ENCODE measurements at regions of chr1 and their contacts with region 1.

Region 1: GRCh38 chr1:24847995-24848881 is 81.8 kb downstream of the RUNX3 start:
- DNase-seq: peak; percentile 95
- ATAC-seq: peak; percentile 94
- H3K4me3 ChIP-seq: peak overlapping the region in 4 of 5 experiments; percentile 54 to 66 (median 64)
- H3K4me3 Mint-ChIP-seq: peak overlapping the region; percentile 80
- H3K27ac ChIP-seq: peak overlapping the region; percentile 68 to 83
- H3K27ac Mint-ChIP-seq: peak overlapping the region; percentile 78
- H3K4me1 ChIP-seq: peaks cover 4 to 13% of the 10 kb centered on the region in 2 donors
- H3K4me1 Mint-ChIP-seq: peaks cover 12% of the 10 kb centered on the region
- H3K27me3 ChIP-seq: no peaks in the 10 kb centered on the region
- H3K27me3 Mint-ChIP-seq: no peaks in the 10 kb centered on the region
- CTCF ChIP-seq: peak; percentile 94

Region 2: GRCh38 chr1:24897767-24898483 is 49.7 kb after region 1 on chr1:
- CTCF ChIA-PET with region 1: interaction called, 9 read pairs
- POLR2A ChIA-PET with region 1: no interaction called
- intact Hi-C with region 1: loop called (anchors 1 kb)
- DNase-seq: peak; percentile 61
- ATAC-seq: peak; percentile 51
- H3K4me3 ChIP-seq: no peak overlapping the region
- H3K4me3 Mint-ChIP-seq: no peak overlapping the region
- H3K27ac ChIP-seq: no peak overlapping the region
- H3K27ac Mint-ChIP-seq: peak overlapping the region; percentile 68
- H3K4me1 ChIP-seq: peaks cover 0 to 10% of the 10 kb centered on the region in 2 donors
- H3K4me1 Mint-ChIP-seq: peaks cover 33% of the 10 kb centered on the region
- H3K27me3 ChIP-seq: no peaks in the 10 kb centered on the region
- H3K27me3 Mint-ChIP-seq: no peaks in the 10 kb centered on the region
- CTCF ChIP-seq: peak; percentile 78

Region 3: DNA sequence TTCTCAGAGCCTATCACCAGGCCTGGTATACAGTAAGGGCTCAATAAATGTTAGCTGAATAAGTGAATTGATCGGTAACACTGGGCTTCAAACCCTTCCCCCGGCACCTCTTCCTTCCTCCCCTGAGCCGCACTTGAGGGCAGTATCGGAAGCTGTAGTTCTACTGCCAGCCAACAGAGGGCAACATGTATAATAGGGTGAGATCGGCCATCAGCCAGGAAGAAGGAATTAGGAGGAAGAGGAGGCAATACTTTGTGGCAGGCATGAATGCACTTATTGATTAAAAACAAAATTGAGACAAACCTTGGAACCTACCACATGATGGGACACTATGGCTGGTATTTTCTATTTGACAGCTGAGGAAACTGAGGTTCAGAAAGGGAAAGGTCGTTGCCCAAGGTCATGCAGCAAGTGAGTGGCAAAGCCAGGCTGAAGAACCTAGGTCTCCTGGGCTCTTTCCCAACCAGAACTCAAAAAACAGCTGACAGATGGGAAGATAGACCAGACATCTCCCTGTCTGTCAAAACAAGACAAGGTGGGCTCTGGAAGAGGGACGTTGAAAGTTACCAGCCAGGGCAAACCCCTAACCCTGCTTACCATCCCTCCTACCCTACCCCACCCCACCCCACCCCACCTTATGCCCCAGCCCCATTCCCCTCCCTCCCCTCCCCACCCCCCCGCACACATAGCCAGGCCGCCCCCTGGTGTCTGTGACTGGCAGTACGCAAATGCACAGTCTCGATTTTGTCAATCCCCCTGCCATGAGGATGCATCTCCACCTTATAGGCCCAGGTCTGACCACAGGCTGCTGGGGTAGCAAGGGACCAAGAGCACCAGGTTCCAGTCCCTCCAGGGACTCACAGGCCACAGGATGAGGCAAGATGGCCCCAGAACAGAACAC is 189.2 kb after region 1 on chr1:
- CTCF ChIA-PET with region 1: interaction called, 118 read pairs
- POLR2A ChIA-PET with region 1: no interaction called
- intact Hi-C with region 1: loop called (anchors 1 kb)
- DNase-seq: peak; percentile 74
- ATAC-seq: peak; percentile 65
- H3K4me3 ChIP-seq: no peak overlapping the region
- H3K4me3 Mint-ChIP-seq: peak overlapping the region; percentile 0
- H3K27ac ChIP-seq: no peak overlapping the region
- H3K27ac Mint-ChIP-seq: peak overlapping the region; percentile 63
- H3K4me1 ChIP-seq: peaks cover 36 to 49% of the 10 kb centered on the region in 2 donors
- H3K4me1 Mint-ChIP-seq: peaks cover 34% of the 10 kb centered on the region
- H3K27me3 ChIP-seq: peaks cover 0 to under 1% (median 0%) of the 10 kb centered on the region in 4 experiments
- H3K27me3 Mint-ChIP-seq: peaks cover 5% of the 10 kb centered on the region
- CTCF ChIP-seq: peak; percentile 71

Region 4: DNA sequence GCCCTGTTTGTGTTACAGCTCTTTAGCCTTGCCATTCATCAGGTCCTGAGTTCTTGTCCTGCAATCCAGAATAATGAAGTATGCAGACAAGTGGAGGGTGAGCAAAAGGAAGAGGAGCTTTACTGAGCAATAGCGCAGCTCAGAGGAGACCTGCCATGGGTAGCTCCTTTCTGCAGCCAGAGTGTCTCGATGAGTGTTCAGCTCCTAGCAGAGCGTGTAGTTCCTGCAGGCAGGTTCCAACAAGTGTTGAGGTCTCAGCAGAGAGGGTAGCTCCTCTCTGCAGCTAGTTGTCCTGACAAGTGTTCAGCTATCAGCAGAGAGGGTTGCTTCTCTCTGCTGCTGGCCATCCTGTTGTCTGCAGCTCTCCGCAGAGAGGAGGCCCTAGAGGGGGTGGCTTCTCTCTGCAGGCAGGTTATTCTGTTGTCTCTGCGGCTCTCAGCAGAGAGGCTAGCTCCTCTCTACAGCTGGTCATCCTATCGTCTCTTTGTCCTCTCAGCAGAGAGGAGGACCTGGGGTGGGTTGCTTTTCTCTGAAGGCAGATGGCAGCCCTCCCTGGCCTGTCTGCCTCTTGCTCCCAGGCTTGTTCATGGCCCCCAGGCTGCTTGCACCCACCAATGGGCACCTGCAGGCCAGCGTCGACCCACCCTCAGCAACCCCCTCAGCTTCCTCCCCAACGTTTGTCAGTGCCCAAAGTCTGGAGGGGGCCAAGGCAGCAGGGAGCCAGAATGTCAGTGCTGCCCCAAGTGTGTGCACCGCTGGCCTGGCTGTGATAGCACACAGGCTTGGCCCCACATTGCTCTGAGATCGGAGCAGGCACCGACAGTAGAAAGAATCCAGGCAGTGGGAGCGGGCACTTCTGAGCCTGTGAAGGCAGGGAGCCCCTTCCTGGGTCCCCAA is 194.3 kb after region 1 on chr1:
- CTCF ChIA-PET with region 1: interaction called, 118 read pairs
- POLR2A ChIA-PET with region 1: no interaction called
- intact Hi-C with region 1: loop called (anchors 1 kb)
- DNase-seq: no peak
- ATAC-seq: no peak
- H3K4me3 ChIP-seq: no peak overlapping the region
- H3K4me3 Mint-ChIP-seq: no peak overlapping the region
- H3K27ac ChIP-seq: no peak overlapping the region
- H3K27ac Mint-ChIP-seq: no peak overlapping the region
- H3K4me1 ChIP-seq: peaks cover 11 to 18% of the 10 kb centered on the region in 2 donors
- H3K4me1 Mint-ChIP-seq: peaks cover 11% of the 10 kb centered on the region
- H3K27me3 ChIP-seq: peaks cover 0 to 7% (median 0%) of the 10 kb centered on the region in 4 experiments
- H3K27me3 Mint-ChIP-seq: peaks cover 5% of the 10 kb centered on the region
- CTCF ChIP-seq: no peak

Region 5: DNA sequence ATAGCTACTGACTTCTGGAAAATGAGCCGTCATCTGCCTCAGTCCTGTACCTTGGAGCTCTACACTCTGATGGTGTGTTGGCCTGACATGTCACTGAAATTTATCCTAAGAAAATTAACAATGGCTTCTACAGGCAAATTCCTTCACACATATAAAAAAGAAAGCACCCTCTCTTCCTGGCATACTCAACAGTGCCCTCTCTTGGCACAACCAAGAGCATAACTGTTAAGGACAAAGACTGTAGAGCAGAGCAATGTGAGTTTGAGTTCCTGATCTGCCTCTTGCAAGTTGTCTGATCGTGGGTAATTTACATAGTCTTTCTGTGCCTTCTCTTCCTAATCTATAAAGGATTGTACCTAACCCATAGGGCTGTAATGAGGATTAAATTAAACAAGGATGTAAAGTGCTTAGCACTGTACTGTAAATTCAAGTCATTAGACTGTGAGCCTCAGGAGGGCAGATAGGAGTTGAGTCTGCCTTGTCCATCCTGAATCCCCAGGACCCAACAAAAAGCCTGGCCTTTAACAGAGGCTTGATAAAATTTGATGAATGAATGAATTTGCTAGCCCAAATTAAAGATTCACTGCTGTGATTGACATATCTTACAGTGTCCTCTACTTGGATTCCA is 300.5 kb after region 1 on chr1:
- CTCF ChIA-PET with region 1: interaction called, 7 read pairs
- POLR2A ChIA-PET with region 1: no interaction called
- intact Hi-C with region 1: loop called (anchors 2 kb)
- DNase-seq: peak; percentile 51
- ATAC-seq: peak; percentile 43
- H3K4me3 ChIP-seq: no peak overlapping the region
- H3K4me3 Mint-ChIP-seq: no peak overlapping the region
- H3K27ac ChIP-seq: no peak overlapping the region
- H3K27ac Mint-ChIP-seq: no peak overlapping the region
- H3K4me1 ChIP-seq: peaks cover 9 to 14% of the 10 kb centered on the region in 2 donors
- H3K4me1 Mint-ChIP-seq: peaks cover 12% of the 10 kb centered on the region
- H3K27me3 ChIP-seq: peaks cover 0 to 6% (median 5%) of the 10 kb centered on the region in 4 experiments
- H3K27me3 Mint-ChIP-seq: peaks cover 33% of the 10 kb centered on the region
- CTCF ChIP-seq: peak; percentile 58

Region 6: DNA sequence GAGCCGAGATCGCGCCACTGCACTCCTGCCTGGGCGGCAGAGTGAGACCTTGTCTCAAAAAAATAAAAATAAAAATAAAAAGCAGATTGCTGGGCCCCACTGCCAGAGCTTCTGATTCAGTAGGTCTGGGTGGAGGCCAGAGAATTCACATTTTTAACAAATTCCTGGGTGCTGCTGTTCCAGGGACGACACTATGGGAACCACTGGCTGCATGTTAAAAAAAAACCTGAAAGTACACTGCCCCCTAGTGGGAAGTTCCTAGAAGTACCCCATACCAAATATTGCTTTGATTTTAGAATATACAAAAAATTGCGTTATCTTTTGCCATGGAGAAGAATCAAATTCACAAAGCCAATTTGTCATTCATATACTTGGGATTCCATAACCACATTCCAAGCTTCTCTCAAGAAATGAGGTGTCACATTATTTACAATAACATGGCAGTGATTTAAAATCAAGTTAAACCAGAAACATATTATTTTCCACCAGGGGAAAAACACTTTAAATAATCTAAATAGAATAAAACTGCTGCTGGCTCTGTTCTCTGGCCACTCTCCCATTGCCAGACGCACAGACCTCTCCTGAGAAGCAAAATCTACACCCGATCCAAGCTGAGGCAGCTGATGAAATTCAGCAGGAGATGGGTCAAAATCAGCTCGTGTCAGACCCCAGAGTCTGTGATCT is 356.7 kb after region 1 on chr1:
- CTCF ChIA-PET with region 1: interaction called, 110 read pairs
- POLR2A ChIA-PET with region 1: no interaction called
- intact Hi-C with region 1: loop called (anchors 1 kb)
- DNase-seq: peak; percentile 63
- ATAC-seq: peak; percentile 49
- H3K4me3 ChIP-seq: no peak overlapping the region
- H3K4me3 Mint-ChIP-seq: no peak overlapping the region
- H3K27ac ChIP-seq: no peak overlapping the region
- H3K27ac Mint-ChIP-seq: no peak overlapping the region
- H3K4me1 ChIP-seq: no peaks in the 10 kb centered on the region
- H3K4me1 Mint-ChIP-seq: no peaks in the 10 kb centered on the region
- H3K27me3 ChIP-seq: peaks cover 0 to 7% (median 0%) of the 10 kb centered on the region in 4 experiments
- H3K27me3 Mint-ChIP-seq: peaks cover 12% of the 10 kb centered on the region
- CTCF ChIP-seq: peak; percentile 86